GM10248 (cell line): ENCODE measurements at regions of chr7 and their contacts with region 1.

Region 1: GRCh38 chr7:106659963-106660861 is 746 bp downstream of the CCDC71L start:
- DNase-seq: peak; percentile 88
- CTCF ChIP-seq: peak; percentile 86

Region 2: DNA sequence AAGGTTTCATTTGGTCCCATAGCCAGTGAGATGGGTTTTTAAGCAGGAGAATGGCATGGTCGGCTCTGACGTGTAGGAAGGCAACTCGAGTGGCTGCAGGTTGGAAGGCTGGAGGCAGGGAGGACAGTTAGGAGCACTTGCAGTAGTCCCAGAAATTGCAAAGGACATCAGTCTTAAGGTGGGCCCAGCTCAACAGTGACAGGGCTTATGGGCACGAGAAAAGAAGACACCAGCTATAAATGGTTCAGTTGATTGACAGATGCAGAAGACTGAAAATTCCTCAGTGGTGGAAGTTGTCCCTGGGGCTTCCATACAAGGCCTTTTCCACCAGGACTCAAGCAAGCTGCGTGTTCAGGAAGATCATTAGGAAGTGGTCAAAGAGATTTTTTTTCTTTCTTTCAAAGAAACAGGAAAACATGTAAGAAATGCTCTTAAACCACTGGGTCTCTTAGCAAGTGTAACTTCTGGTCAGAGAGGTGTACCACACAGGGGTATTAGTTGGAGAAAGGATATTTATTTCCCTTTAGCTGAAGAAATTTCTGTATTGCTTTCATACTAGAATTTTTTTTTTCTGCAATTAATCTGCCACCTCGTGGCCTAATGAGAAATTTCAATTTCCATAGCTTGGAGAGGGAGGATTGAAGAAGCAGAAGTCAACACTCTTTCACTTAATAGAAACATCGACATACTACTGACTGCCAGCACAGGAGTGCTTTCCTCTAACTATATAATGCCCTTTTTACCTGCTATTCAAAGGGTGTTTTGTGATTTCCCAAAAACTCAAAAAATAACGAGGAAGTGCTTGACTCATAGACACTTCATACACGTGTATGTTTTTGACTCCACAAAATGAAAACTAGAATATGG is 198.0 kb before region 1 on chr7:
- CTCF ChIA-PET with region 1: no interaction called
- POLR2A ChIA-PET with region 1: no interaction called
- DNase-seq: peak; percentile 27
- CTCF ChIP-seq: peak; percentile 52

Region 3: GRCh38 chr7:106598663-106599342 is 61.4 kb before region 1 on chr7:
- CTCF ChIA-PET with region 1: interaction called, 14 read pairs
- POLR2A ChIA-PET with region 1: no interaction called
- DNase-seq: peak; percentile 64
- CTCF ChIP-seq: no peak

Region 4: GRCh38 chr7:106679153-106679931 is 19.1 kb after region 1 on chr7:
- CTCF ChIA-PET with region 1: interaction called, 10 read pairs
- POLR2A ChIA-PET with region 1: no interaction called
- DNase-seq: peak; percentile 29
- CTCF ChIP-seq: no peak

Region 5: GRCh38 chr7:106731187-106731586 is 71.0 kb after region 1 on chr7:
- CTCF ChIA-PET with region 1: interaction called, 76 read pairs
- POLR2A ChIA-PET with region 1: no interaction called
- DNase-seq: peak; percentile 22
- CTCF ChIP-seq: no peak